ENCODE measurements at regions of chr6 and their contacts with region 1.

Region 1: GRCh38 chr6:13038315-13038714 is 290.0 kb downstream of the TBC1D7 start:
- DNase-seq: no peak
- ATAC-seq: peak; percentile 56

Region 2: GRCh38 chr6:13079096-13079723 is 40.9 kb after region 1 on chr6:
- intact Hi-C with region 1: loop called (anchors 5 kb)
- DNase-seq: no peak
- ATAC-seq: no peak